ENCODE measurements at regions of chr19 and their contacts with region 1.

Region 1: GRCh38 chr19:42313096-42313839 is at the start of gene TMEM145:
- DNase-seq: peak; percentile 74
- ATAC-seq: peak; percentile 73
- H3K4me3 Mint-ChIP-seq: peak within 1 kb of the TSS; percentile 80
- H3K27ac Mint-ChIP-seq: no peak within 1 kb of the TSS
- H3K4me1 Mint-ChIP-seq: peaks cover 14% of the 10 kb centered on the region
- H3K27me3 Mint-ChIP-seq: peaks cover 26% of the 10 kb centered on the region
- CTCF ChIP-seq: no peak
- total RNA-seq, gene TMEM145: 6.9 to 7.1 TPM (median 7.0 TPM) in 3 replicates

Region 2: GRCh38 chr19:42323852-42324654 is 10.8 kb after region 1 on chr19:
- CTCF ChIA-PET with region 1: interaction called, 13 read pairs
- POLR2A ChIA-PET with region 1: no interaction called
- DNase-seq: peak; percentile 55
- ATAC-seq: no peak
- H3K4me3 Mint-ChIP-seq: peak overlapping the region; percentile 95
- H3K27ac Mint-ChIP-seq: no peak overlapping the region
- H3K4me1 Mint-ChIP-seq: peaks cover 14% of the 10 kb centered on the region
- H3K27me3 Mint-ChIP-seq: peaks cover 44% of the 10 kb centered on the region
- CTCF ChIP-seq: no peak

Measured in WTC11 (cell line).